ENCODE measurements at regions of chr18 and their contacts with region 1.

Region 1: DNA sequence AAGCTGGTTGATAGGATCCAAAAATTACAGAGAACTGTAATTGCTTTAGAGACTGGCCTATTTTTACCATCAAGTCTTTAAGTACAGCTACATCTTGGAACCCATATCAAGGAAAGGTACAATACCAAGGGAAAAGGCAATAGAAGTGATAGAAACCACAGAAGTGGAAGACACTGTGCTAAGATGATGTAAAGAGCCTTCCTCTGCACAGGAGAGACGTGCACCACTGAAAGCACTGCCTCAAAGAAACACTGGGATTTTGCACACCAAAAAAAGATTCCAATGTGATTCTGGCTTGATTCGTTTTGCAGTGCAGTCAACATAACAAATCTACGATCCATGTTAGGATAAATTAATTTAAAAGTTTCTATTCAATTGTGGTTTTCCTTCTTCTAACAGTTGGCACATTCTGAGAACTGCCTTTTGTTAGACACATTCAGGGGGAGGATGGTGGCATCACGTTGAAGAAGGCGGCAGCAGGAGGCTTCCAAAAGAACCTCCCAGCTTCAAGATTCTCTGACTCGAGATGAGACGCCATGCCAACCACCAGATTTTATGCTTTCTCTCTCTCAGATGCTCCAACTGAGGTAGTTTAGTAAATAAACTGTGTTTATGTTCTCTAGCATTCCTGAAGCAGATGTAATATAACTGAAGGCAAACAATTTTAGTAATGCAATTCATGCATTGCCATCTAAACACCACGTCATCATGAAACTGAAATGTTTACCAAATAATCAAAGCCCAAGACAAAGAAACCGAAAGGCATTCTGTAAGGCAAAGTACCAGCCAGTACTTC is 102.9 kb downstream of the BCL2 start:
- DNase-seq: no peak
- H3K4me3 Mint-ChIP-seq: peak overlapping the region; percentile 67
- H3K27ac Mint-ChIP-seq: peak overlapping the region; percentile 89
- H3K4me1 Mint-ChIP-seq: peaks cover 94% of the 10 kb centered on the region
- H3K27me3 Mint-ChIP-seq: no peaks in the 10 kb centered on the region

Region 2: DNA sequence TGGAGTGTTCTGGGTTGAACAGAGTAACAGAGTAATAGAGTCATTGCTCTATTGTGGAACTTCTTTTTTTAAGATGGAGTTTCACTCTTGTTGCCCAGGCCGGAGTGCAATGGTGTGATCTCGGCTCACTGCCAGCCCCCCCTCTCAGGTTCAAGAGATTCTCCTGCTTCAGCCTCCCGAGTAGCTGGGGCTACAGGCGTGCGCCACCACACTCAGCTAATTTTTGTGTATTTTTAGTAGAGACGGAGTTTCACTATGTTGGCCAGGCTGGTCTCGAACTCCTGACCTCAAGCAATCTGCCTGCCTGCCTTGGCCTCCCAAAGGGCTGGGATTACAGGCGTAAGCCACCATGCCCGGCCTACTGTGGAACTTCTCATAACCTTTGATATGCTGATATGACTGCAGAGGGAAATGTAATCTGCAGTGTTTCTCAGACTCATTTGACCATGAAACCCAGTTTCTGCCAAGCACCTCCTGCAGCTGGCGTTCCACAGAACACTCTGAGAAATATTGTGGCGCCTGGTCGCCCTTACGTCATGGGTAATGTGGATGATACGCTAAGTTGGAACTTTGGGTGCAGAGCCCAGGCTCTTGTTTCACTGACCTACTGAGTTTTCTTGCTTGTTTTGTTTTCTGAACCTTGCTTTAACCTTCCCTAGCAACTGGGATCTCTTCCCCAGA is 110.9 kb before region 1 on chr18:
- intact Hi-C with region 1: loop called (anchors 1 kb)
- DNase-seq: no peak
- H3K4me3 Mint-ChIP-seq: no peak overlapping the region
- H3K27ac Mint-ChIP-seq: no peak overlapping the region
- H3K4me1 Mint-ChIP-seq: peaks cover 37% of the 10 kb centered on the region
- H3K27me3 Mint-ChIP-seq: peaks cover 20% of the 10 kb centered on the region

Region 3: DNA sequence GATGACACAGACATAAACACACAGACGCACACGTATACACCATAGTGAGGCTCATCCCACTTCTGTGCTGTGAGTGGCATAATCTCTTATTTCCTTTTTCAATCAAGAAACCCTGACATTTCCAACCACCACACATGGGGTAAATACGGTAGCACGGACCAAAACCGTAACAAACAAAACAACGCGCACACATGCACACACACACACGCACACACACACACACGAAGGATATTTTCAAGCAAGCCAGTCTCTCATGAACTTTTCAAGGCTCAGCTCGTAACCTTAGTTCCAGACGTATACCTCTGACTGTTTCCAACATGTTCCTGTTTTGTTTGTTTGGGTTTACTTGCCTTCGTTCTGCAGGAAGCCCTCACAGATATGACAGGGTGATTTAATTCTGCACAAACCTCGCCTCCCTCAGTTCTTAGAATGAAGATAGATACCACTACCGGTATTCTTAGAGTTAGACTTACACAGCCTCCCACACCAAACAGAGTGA is 16.9 kb before region 1 on chr18:
- intact Hi-C with region 1: loop called (anchors 1 kb)
- DNase-seq: peak; percentile 60
- H3K4me3 Mint-ChIP-seq: no peak overlapping the region
- H3K27ac Mint-ChIP-seq: no peak overlapping the region
- H3K4me1 Mint-ChIP-seq: peaks cover 25% of the 10 kb centered on the region
- H3K27me3 Mint-ChIP-seq: no peaks in the 10 kb centered on the region

Region 4: DNA sequence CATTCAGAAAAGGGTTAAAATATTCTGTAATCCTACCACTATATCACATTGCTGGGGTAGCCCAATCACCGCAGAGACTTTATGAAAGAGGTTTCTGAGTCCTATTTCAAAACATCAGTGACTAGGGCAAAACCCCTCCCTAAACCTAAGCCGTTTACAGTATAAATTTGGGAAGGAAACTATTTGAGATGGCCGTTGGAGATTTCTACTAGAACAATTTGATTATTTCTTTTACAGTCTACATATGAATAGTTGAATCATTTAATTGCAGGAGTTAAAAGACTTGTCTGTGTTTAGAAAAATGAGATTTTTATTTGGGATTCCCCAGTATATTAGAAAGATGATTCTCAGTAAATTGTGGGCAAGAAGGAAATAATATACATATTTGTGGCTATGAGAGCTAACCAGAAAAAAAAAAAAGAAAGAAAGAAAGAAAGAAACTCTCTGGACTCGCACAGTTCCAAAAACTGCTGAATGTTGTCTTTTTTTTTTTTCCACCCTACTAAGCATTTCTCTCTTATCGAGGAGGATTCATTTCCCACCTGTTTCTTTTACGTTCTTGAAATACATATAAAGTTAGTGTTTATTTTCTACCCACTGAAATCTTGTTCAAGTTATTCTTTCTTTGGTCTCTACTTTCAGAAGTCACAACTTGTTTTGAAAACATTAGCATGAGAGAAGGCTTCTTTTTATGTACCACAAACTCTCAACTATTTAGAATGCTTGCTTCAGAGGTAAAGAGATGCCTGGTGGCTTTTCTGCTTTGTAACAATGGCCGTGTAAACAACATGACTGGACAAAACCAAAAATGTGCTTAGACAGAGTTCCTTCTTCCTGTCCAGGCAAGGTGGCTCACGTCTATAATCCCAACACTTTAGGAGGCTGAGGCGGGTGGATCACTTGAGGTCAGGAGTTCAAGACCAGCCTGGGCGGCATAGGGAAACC is 37.0 kb after region 1 on chr18:
- intact Hi-C with region 1: loop called (anchors 5 kb)
- DNase-seq: no peak
- H3K4me3 Mint-ChIP-seq: no peak overlapping the region
- H3K27ac Mint-ChIP-seq: peak overlapping the region; percentile 79
- H3K4me1 Mint-ChIP-seq: peaks cover 78% of the 10 kb centered on the region
- H3K27me3 Mint-ChIP-seq: no peaks in the 10 kb centered on the region

Region 5: DNA sequence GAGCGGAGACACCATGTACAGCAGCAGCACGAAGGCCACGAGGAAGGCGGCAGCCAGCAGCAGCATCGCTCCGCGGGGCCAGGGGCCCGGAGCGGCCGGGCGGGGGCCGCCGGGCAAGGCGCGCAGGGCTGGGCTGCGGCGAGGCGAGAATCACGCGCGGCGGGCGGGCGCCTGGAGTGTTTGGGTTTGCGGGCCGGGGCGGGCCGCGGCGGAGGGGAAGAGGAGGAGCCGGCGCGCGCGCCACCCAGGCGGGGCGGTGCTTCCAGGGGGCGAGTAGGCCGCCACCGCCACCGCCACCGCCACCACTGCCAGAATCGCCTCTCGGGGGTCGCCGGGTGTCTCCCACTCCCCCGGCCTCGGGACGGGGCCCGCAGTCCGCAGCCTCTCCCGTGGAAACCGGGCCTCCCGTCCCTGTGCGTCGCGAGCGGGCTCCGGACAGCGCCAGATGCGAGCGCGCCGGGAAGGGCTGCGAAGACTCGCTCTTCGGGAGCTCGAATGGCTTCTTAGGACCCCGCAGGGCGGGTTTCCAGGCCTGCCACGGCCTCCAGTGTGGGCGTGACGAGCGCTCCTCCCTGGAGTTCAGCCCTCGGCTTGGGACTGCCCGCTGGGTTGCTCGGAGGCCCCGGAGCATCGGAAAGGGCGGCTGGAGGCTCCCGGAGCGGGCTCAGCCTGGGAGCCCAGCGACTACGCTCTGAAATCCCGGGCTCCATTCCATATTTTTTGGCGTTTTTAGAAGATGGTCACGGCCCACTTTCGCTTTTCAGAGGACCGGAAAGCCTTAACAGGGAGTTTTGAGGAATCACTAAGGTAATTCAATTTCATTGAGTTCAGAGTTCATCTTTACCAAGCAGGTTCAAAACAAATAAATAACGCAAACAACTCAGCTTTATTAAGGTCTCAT is 150.6 kb after region 1 on chr18 and contains the start of gene KDSR:
- intact Hi-C with region 1: loop called (anchors 5 kb)
- DNase-seq: peak; percentile 82
- H3K4me3 Mint-ChIP-seq: peak within 1 kb of the TSS; percentile 93
- H3K27ac Mint-ChIP-seq: peak within 1 kb of the TSS; percentile 83
- H3K4me1 Mint-ChIP-seq: peaks cover 44% of the 10 kb centered on the region
- H3K27me3 Mint-ChIP-seq: no peaks in the 10 kb centered on the region
- total RNA-seq, gene KDSR: 72.2 and 83.5 TPM in 2 replicates

Measured in activated T-helper 1 cell treated with anti-CD3 and anti-CD28 coated beads, Interleukin-12 subunit alpha, Interleukin-12 subunit beta, Interleukin-2, Interleukin-4 antibody, amounts not matched to agents 30 ng/mL and 10 ng/mL and 1 ng/mL, durations not matched to agents 14 hours and 24 hours and 36 hours (primary cell).